Head of caudate nucleus (tissue), 42 donors: ENCODE measurements at regions of chr3 and their contacts with region 1.

Region 1: DNA sequence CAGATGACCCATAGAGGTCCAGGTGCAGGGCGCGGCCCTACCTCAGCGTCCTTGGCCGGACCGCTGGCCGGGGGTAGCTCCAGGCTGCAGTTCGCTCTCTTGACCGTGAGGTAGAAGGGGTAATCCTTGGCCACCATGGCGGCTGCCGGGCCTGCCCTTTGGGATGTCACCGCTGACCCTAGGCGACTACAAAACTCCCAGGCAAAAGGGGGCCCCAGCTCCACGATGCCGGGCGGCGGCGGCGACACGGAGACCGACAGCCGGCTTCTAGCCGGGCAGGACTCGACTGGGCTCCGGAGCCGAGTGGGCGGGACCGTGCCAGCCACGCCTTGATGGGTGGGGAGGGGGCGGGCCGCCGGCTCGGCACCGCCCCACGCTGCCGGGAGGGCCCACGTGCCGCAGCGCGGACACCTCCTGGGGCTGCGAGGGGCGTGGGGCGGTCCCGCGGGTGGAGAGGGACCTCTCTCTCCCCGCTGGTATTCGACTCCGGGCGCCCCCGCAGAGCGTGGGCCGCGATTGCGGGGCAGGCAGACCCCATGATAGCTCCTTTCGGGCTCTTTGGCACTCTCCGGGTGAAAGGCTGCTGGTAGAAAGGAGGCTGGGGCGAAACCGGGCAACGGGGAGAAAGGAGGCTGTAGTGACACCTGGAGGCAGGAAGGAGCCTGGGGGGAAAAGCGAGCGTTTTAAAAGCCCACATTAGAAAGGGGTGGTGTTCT is at the start of gene ARHGEF3:
- DNase-seq: peak; percentile 75 to 97 (median 92)

Region 2: DNA sequence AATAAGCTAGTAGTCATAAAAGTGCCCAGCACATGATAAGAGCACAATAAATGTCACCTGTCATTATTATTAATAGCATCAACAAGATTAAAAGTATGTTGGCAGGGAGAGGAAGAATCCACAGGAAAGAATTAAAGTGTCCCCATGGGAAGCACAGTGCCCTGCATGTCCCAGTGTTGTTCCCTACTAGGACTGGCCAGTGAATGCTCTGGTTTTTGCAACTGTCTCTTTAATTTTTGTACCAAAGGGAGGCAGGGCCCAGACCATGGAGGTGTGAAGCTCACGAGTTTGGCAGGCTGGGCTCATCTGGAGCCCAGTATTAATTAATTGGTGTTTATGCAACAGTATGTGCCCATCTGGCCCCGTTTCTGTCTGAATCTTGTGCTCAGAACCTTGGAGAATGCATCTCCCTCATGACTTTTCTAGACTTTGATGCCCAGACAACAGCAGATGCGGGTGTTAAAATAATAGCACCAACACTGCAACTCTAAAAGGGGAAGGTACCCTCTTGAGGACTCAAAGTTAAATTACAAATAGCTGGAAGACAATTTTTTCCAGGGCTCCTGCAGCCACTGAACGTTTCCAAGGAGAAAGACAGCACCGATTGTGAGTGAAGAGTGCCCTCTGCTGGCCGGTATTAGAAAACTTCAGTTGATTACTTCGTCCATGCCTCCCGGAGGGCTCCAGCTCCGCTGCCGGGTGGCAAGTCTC is 186.8 kb after region 1 on chr3:
- intact Hi-C with region 1: loop called (anchors 5 kb)
- DNase-seq: peak; percentile 68 to 97 (median 90)